CD14-positive monocyte (primary cell): ENCODE measurements at regions of chrX and their contacts with region 1.

Region 1: GRCh38 chrX:41333744-41334259 is at the start of gene DDX3X:
- DNase-seq: peak; percentile 77 to 94 (median 91)
- H3K4me3 ChIP-seq: peak within 1 kb of the TSS; percentile 79 to 88 (median 84)
- H3K4me3 Mint-ChIP-seq: peak within 1 kb of the TSS; percentile 92 to 94
- H3K27ac ChIP-seq: peak within 1 kb of the TSS; percentile 93 to 100
- H3K27ac Mint-ChIP-seq: peak within 1 kb of the TSS; percentile 100
- H3K4me1 ChIP-seq: peaks cover 30 to 76% of the 10 kb centered on the region in 2 donors
- H3K4me1 Mint-ChIP-seq: peaks cover 28% of the 10 kb centered on the region
- H3K27me3 ChIP-seq: no peaks in the 10 kb centered on the region
- H3K27me3 Mint-ChIP-seq: peaks cover 0 to 23% (median 0%) of the 10 kb centered on the region in 3 donors
- CTCF ChIP-seq: no peak
- polyA plus RNA-seq, gene DDX3X: 165 to 280 (median 200) TPM

Region 2: DNA sequence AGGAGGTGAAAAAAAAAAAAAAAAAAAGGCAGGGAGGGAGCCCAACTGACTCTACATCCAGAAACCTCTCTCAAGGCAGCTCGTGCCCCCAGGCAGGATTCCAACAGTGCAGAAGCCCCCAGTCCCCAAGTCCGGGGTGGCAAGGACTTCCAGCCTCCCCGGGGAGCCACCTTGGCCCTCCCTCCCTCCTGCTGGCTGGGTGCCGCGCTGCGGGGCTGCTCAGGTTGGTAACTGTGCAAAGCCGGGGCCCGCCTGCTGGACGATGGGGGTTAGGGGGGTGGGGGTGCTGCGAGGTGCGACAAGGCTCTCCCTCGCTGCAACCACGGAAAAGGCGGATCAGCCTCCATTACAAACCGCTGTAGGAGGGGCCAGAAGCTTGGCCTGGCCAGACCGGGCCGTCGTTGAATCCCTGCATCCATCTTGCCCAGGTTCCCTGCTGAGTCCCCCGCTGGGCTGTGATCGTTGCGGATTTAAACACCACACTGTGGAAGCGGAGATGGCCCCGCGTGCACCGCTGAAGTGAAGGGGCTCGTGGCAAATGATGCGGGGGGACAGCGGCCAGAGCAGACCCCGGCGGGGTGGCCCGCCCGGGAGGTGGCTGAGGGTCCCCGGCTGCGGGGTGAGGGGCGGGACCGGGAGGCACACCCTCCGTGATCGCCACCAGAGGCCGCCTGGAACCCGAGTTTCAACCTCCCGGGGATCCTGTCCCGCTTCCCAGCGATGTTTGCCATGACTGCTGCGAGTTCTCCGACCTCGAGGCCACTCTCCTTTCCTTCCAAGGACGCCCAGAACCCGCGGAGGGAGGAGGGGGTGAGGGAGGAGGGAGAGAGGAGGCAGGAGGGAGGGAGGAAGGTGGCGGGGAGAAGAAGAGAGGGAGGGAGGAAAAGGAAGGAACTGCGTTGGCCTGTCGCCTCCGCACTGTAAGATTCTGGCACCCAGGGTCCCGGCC is 57.9 kb before region 1 on chrX:
- intact Hi-C with region 1: loop called in 1 of 2 experiments (anchors 10 kb)
- DNase-seq: peak; percentile 19 to 27 (median 25)
- H3K4me3 ChIP-seq: peak overlapping the region; percentile 41 to 78 (median 52)
- H3K4me3 Mint-ChIP-seq: peak overlapping the region; percentile 83 to 88
- H3K27ac ChIP-seq: peak overlapping the region; percentile 40 to 72
- H3K27ac Mint-ChIP-seq: peak overlapping the region in 6 of 7 donors; percentile 46 to 83 (median 70)
- H3K4me1 ChIP-seq: peaks cover 13 to 17% of the 10 kb centered on the region in 2 donors
- H3K4me1 Mint-ChIP-seq: peaks cover 12% of the 10 kb centered on the region
- H3K27me3 ChIP-seq: no peaks in the 10 kb centered on the region
- H3K27me3 Mint-ChIP-seq: peaks cover 0 to 50% (median 0%) of the 10 kb centered on the region in 3 donors
- CTCF ChIP-seq: peak; percentile 35

Region 3: DNA sequence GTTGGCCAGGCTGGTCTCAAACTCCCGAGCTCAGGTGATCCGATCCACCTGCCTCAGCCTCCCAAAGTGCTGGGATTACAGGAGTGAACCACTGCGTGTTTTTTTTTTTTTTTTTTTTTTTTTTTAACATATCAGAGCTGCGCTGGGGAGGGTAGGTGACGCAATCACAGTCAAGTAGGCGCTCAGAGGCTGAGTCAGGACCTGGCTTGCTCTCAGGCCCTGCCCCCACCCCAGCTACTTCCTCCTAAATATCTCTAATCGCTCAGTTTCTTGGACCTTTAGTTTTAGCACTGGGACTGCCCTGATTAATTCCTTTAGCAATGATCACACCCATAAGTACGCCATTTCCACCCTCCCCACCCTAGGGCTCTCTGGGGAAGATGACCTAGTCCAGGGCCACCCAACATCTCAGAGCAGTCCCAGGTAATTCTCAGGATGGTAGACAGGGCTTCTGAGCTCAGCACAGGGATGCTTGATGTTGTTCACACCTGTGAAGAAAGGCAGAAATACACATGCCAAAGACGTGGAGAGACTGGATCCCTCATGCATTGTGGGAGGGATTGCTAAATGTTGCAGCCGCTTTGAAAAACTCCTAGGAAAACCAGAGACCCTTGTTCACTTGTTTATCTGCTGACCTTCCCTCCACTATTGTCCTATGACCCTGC is 50.4 kb after region 1 on chrX:
- intact Hi-C with region 1: loop called (anchors 5 kb)
- DNase-seq: peak; percentile 88 to 91 (median 89)
- H3K4me3 ChIP-seq: no peak overlapping the region
- H3K4me3 Mint-ChIP-seq: peak overlapping the region in 1 of 2 donors; percentile 39
- H3K27ac ChIP-seq: peak overlapping the region; percentile 71 to 72
- H3K27ac Mint-ChIP-seq: peak overlapping the region; percentile 77 to 94 (median 91)
- H3K4me1 ChIP-seq: peaks cover 33 to 40% of the 10 kb centered on the region in 2 donors
- H3K4me1 Mint-ChIP-seq: peaks cover 24% of the 10 kb centered on the region
- H3K27me3 ChIP-seq: no peaks in the 10 kb centered on the region
- H3K27me3 Mint-ChIP-seq: peaks cover 0 to 16% (median 0%) of the 10 kb centered on the region in 3 donors
- CTCF ChIP-seq: no peak

Region 4: DNA sequence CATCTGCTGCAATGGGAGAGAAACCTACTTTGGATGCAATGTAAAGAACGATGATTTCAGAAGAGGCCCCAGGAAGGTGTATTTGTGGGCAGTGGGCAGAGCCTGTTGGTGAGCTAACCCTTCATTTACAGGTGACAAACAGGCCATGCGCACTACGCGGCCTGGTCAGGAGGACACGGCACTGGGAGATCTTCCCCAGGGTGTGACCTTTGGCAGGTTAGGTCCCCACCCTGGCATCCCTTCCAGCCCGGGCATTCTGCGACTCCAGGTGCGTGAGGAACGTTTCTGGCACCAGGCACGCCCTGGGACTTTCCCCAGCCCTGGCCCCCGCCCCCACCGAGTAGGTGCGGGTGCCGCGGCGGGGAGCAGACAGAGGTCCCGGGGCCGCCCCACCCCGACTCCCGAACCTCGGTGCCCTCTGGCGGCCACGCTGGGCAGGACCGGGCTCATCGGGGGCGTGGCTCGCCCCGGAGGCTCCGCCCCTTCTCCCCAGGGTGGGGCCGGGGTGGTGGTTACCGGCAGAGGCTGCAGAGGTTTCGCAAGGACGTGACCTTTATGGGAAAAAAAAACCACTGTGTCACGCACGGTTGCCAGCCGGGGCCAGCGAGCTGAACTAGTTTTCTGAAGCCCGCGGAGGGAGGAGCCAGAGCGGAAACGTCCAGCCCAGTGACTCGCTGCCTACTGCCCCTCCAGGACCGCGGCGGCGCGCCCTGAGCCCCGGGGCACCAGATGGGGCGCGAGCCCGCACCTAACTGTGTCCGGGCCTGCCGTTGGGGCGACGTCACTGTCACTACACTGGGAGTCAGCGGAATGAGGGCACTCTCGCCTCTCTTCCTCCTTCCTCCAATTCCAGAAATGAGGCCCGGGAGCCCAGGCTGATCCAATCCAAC is 108.4 kb after region 1 on chrX:
- intact Hi-C with region 1: loop called (anchors 5 kb)
- DNase-seq: peak; percentile 95 to 96 (median 96)
- H3K4me3 ChIP-seq: peak overlapping the region; percentile 10 to 60 (median 28)
- H3K4me3 Mint-ChIP-seq: peak overlapping the region; percentile 72 to 86
- H3K27ac ChIP-seq: peak overlapping the region; percentile 88 to 99
- H3K27ac Mint-ChIP-seq: peak overlapping the region; percentile 97 to 99 (median 98)
- H3K4me1 ChIP-seq: peaks cover 18 to 24% of the 10 kb centered on the region in 2 donors
- H3K4me1 Mint-ChIP-seq: peaks cover 14% of the 10 kb centered on the region
- H3K27me3 ChIP-seq: no peaks in the 10 kb centered on the region
- H3K27me3 Mint-ChIP-seq: peaks cover 0 to 12% (median 0%) of the 10 kb centered on the region in 3 donors
- CTCF ChIP-seq: peak; percentile 74

Region 5: DNA sequence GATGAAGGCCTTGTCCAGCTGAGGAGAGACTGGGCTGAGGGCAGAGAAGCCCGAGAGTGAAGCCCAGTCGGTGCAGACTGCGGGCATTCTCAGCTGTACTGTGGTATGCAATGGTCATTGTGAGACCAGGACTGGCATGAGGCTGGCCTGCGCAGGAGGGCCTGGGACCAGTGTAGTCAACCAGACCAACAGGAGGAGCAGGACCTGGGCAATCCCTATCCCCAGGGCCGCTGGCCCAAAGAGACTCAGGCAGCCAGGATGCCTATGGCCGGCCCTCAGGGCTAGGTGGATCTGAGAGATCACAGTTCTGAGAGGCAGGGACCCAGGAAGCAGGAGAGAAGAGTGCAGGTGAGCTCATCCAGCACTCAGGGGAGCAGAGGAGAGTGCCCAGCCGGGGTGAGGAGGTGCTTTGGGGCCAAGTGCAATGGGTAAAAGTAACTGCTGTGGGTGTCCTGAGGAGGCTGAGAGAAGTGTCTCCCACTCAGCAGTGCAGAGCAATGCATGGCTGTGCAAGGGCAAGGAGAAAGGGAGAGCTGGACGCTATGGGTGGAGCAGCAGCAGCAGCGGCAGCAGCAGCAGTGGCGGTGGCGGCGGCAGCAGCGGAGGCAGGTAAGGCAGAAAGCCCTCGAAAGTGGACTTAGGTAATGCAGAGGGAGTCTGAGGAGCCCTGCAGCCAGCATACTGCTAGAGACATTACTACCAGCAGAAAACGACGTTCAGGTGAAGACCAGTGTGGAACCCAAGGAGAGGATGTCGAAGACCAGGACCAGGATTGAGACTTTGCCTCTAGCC is 195.2 kb after region 1 on chrX:
- intact Hi-C with region 1: no loop called
- DNase-seq: no peak
- H3K4me3 ChIP-seq: no peak overlapping the region
- H3K4me3 Mint-ChIP-seq: no peak overlapping the region
- H3K27ac ChIP-seq: no peak overlapping the region
- H3K27ac Mint-ChIP-seq: peak overlapping the region in 2 of 7 donors; percentile 6 to 51
- H3K4me1 ChIP-seq: no peaks in the 10 kb centered on the region
- H3K4me1 Mint-ChIP-seq: peaks cover 2% of the 10 kb centered on the region
- H3K27me3 ChIP-seq: peaks cover 0 to 11% of the 10 kb centered on the region in 2 donors
- H3K27me3 Mint-ChIP-seq: peaks cover 0 to 11% (median 0%) of the 10 kb centered on the region in 3 donors
- CTCF ChIP-seq: no peak